Naive thymus-derived CD4-positive, alpha-beta T cell (primary cell): ENCODE measurements at regions of chr14 and their contacts with region 1.

Region 1: DNA sequence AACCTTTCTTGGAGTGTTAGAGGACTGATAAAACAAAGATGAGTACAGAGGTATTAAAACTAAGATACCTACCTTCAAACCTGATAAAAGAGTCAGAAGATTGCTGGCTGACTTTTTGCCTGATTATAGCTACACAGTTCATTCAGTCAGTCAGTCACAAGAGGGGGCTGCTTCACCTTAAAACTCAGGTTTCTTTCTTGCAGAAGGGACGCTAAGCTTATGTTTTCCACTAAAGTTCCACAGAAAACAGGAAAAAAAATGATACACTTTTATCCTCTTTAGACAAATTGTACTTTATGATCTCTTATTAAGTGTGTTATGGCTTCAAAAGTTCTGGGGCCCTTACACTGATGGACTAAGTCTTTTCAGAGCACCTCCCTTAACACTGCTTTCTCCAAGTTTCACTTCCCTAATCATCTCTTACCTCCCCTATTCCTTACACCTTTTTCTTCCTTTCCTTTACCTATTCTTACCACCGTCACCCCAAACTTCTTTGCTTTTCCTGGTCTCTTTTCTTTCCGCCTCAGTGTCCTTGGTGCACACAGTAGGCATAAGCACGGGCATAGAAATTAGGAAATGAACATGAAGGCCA is 448.7 kb upstream of the OR4E1 start:
- DNase-seq: peak in 3 of 9 donors; percentile 26 to 46 (median 37)
- ATAC-seq: no peak
- H3K4me3 ChIP-seq: peak overlapping the region; percentile 20
- H3K4me3 Mint-ChIP-seq: peak overlapping the region; percentile 72 to 95 (median 85)
- H3K27ac ChIP-seq: peak overlapping the region; percentile 71
- H3K27ac Mint-ChIP-seq: peak overlapping the region in 8 of 9 donors; percentile 84 to 95 (median 91)
- H3K4me1 ChIP-seq: no peaks in the 10 kb centered on the region
- H3K4me1 Mint-ChIP-seq: peaks cover 0 to 30% (median 18%) of the 10 kb centered on the region in 7 donors
- H3K27me3 ChIP-seq: no peaks in the 10 kb centered on the region
- H3K27me3 Mint-ChIP-seq: peaks cover 0 to 7% (median 0%) of the 10 kb centered on the region in 5 donors

Region 2: DNA sequence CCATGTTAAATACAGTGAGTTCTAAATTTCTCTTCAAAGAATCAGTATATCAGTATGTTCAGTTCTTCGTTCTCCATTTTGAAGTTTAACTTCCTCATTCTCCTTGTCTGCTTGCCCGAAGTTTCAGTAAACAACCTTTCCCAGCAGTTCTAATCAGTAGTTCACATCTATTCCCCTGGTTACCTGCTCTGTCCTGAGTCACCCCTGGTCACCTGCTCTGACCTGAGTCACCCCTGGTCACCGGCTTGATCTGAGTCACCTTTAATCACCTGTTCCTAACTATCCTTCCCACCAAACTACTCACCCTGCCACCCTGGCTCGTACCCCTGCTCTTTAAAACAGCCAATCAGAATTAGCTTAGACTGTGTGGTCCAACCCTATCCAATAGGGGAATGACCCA is 533.0 kb before region 1 on chr14:
- CTCF ChIA-PET with region 1: no interaction called
- POLR2A ChIA-PET with region 1: no interaction called
- intact Hi-C with region 1: no loop called
- DNase-seq: no peak
- ATAC-seq: no peak
- H3K4me3 ChIP-seq: no peak overlapping the region
- H3K4me3 Mint-ChIP-seq: no peak overlapping the region
- H3K27ac ChIP-seq: no peak overlapping the region
- H3K27ac Mint-ChIP-seq: no peak overlapping the region
- H3K4me1 ChIP-seq: no peaks in the 10 kb centered on the region
- H3K4me1 Mint-ChIP-seq: peaks cover 0 to 2% (median 0%) of the 10 kb centered on the region in 7 donors
- H3K27me3 ChIP-seq: no peaks in the 10 kb centered on the region
- H3K27me3 Mint-ChIP-seq: peaks cover 10 to 32% (median 21%) of the 10 kb centered on the region in 5 donors

Region 3: GRCh38 chr14:22163051-22163450 is 40.7 kb after region 1 on chr14:
- CTCF ChIA-PET with region 1: no interaction called
- POLR2A ChIA-PET with region 1: interaction called, 6 read pairs
- intact Hi-C with region 1: loop called in 1 of 2 experiments (anchors 5 kb)
- DNase-seq: peak in 4 of 9 donors; percentile 0 to 31 (median 23)
- ATAC-seq: peak; percentile 46
- H3K4me3 ChIP-seq: peak overlapping the region; percentile 20
- H3K4me3 Mint-ChIP-seq: peak overlapping the region; percentile 47 to 92 (median 88)
- H3K27ac ChIP-seq: no peak overlapping the region
- H3K27ac Mint-ChIP-seq: peak overlapping the region; percentile 29 to 91 (median 81)
- H3K4me1 ChIP-seq: no peaks in the 10 kb centered on the region
- H3K4me1 Mint-ChIP-seq: peaks cover 0 to 25% (median 20%) of the 10 kb centered on the region in 7 donors
- H3K27me3 ChIP-seq: no peaks in the 10 kb centered on the region
- H3K27me3 Mint-ChIP-seq: peaks cover 0 to 4% (median 0%) of the 10 kb centered on the region in 5 donors

Region 4: DNA sequence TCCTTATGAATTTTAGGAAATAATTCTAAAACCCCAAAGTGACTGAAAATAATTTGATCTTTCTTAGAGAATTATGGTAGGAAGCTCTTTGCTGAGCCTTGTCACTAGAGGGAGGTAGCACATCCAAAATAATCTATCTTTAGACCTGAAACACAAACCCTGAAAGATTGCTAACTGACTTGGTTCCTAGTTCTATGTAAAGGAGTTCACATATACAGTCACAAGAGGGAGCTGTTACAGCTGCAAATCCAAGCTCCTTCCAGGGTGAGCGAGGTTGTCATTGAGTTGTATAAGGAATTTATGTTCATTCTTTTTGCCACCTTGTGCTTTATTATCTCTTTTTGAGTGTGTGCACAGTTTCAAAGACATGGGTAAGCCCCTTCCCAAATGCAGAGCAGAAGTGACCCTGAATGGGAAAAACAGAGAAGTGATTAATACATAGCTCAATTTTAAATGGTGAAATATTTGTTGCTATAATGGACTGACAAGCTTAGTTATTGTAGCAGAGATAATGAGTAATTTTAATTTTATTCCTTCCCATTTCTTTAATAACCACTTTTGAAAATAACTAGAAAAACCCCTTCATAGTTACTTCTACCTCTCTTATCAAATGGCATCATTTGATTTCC is 78.8 kb after region 1 on chr14:
- CTCF ChIA-PET with region 1: no interaction called
- POLR2A ChIA-PET with region 1: no interaction called
- intact Hi-C with region 1: loop called in 1 of 2 experiments (anchors 5 kb)
- DNase-seq: peak in 6 of 9 donors; percentile 18 to 56 (median 37)
- ATAC-seq: peak; percentile 84
- H3K4me3 ChIP-seq: no peak overlapping the region
- H3K4me3 Mint-ChIP-seq: peak overlapping the region in 3 of 10 donors; percentile 25 to 63 (median 33)
- H3K27ac ChIP-seq: no peak overlapping the region
- H3K27ac Mint-ChIP-seq: peak overlapping the region in 2 of 9 donors; percentile 54 to 75
- H3K4me1 ChIP-seq: no peaks in the 10 kb centered on the region
- H3K4me1 Mint-ChIP-seq: peaks cover 0 to 17% (median 8%) of the 10 kb centered on the region in 7 donors
- H3K27me3 ChIP-seq: no peaks in the 10 kb centered on the region
- H3K27me3 Mint-ChIP-seq: no peaks in the 10 kb centered on the region

Region 5: DNA sequence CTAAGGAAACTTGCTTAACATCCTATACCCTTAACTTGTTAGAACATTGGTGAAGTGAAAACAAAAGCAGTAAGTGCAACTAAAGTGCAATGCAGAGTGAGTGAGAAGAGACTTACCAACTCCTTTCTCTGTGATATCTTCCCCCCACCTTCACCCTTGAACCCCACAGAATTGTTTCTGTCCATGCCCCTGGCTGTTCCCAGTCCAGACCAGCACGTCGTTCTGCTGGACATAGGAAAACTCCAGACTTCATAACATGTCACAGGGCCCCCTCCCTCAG is 374.8 kb after region 1 on chr14:
- CTCF ChIA-PET with region 1: no interaction called
- POLR2A ChIA-PET with region 1: interaction called, 3 read pairs
- intact Hi-C with region 1: loop called (anchors 5 kb)
- DNase-seq: no peak
- ATAC-seq: no peak
- H3K4me3 ChIP-seq: peak overlapping the region; percentile 67
- H3K4me3 Mint-ChIP-seq: peak overlapping the region; percentile 79 to 96 (median 89)
- H3K27ac ChIP-seq: peak overlapping the region; percentile 90
- H3K27ac Mint-ChIP-seq: peak overlapping the region; percentile 90 to 97 (median 95)
- H3K4me1 ChIP-seq: peaks cover 3 to 9% of the 10 kb centered on the region in 2 donors
- H3K4me1 Mint-ChIP-seq: peaks cover 4 to 49% (median 21%) of the 10 kb centered on the region in 7 donors
- H3K27me3 ChIP-seq: no peaks in the 10 kb centered on the region
- H3K27me3 Mint-ChIP-seq: no peaks in the 10 kb centered on the region

Region 6: DNA sequence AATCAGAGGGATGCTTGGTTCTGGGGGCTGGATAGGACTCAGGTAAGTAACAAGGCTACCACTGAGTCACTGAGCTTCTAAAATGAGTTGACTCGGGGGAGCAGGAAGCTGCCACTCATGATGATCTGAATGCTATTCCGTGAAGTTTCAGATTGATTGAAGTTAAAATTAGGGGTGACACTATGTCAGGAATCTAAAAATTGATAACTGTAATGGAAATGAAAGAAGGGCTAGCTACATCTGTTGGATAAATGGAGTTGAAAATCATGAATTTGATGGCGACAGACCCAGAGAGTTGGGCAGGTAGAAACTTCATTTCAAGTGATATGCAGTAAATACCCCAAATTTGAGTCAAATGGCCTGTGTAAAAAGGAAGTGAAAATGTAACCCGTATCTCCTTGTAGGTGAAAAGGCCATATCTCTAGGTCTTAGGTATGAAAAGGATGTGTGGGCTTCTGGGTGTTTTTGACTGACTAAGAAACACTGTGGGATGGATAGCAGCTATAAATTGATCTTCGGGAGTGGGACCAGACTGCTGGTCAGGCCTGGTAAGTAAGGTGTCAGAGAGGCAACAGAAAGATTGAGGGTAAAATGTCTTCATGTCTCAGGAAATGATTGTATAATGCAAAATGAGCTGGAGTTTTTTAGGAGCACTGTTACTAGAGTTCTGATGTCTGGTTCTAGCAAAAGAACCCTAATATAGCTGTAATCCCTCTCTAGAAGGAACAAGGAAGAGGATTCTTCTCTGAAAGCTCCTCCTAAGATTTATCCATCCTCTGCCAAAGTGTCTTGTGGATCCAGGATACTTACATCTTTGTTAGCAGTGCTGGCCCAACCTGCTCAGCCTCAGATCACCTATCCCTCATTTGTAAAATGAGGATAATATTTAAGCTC is 409.4 kb after region 1 on chr14:
- CTCF ChIA-PET with region 1: interaction called, 6 read pairs
- POLR2A ChIA-PET with region 1: no interaction called
- intact Hi-C with region 1: loop called in 1 of 2 experiments (anchors 5 kb)
- DNase-seq: peak in 2 of 9 donors; percentile 55 to 61
- ATAC-seq: peak; percentile 51
- H3K4me3 ChIP-seq: peak overlapping the region; percentile 44
- H3K4me3 Mint-ChIP-seq: peak overlapping the region; percentile 79 to 92 (median 86)
- H3K27ac ChIP-seq: peak overlapping the region; percentile 90
- H3K27ac Mint-ChIP-seq: peak overlapping the region; percentile 90 to 99 (median 94)
- H3K4me1 ChIP-seq: peaks cover 77 to 90% of the 10 kb centered on the region in 2 donors
- H3K4me1 Mint-ChIP-seq: peaks cover 56 to 98% (median 92%) of the 10 kb centered on the region in 7 donors
- H3K27me3 ChIP-seq: no peaks in the 10 kb centered on the region
- H3K27me3 Mint-ChIP-seq: no peaks in the 10 kb centered on the region